WTC11 (cell line): ENCODE measurements at regions of chr9 and their contacts with region 1.

Region 1: GRCh38 chr9:93003552-93004407 is 54.7 kb upstream of the SUSD3 start:
- DNase-seq: peak; percentile 77
- ATAC-seq: peak; percentile 97
- H3K4me3 Mint-ChIP-seq: no peak overlapping the region
- H3K27ac Mint-ChIP-seq: no peak overlapping the region
- H3K4me1 Mint-ChIP-seq: peaks cover 15% of the 10 kb centered on the region
- H3K27me3 Mint-ChIP-seq: peaks cover 7% of the 10 kb centered on the region
- CTCF ChIP-seq: peak; percentile 53; the same call in 1 of the 2 replicates

Region 2: DNA sequence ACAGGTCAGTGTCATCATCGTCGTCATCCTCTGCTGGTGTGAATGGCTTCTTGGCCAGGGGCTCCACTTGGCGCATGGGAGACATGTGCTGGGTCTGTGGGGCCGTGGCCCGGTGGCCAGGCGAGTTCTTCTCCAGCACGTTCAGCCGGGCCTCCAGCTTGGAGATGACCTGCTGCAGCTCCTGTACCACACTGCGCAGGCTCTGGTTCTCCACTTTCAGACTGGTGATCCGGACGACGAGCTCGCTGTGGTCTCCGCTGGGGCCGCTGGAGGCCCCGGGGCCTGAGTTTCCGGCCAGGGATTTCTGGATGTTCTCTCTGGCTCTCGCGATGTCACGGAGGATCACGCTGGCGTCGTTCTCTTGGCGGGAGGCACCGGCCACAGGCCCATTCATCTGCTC is 166.6 kb before region 1 on chr9:
- CTCF ChIA-PET with region 1: no interaction called
- POLR2A ChIA-PET with region 1: no interaction called
- DNase-seq: no peak
- ATAC-seq: no peak
- H3K4me3 Mint-ChIP-seq: no peak overlapping the region
- H3K27ac Mint-ChIP-seq: no peak overlapping the region
- H3K4me1 Mint-ChIP-seq: no peaks in the 10 kb centered on the region
- H3K27me3 Mint-ChIP-seq: peaks cover 20% of the 10 kb centered on the region
- CTCF ChIP-seq: no peak

Region 3: DNA sequence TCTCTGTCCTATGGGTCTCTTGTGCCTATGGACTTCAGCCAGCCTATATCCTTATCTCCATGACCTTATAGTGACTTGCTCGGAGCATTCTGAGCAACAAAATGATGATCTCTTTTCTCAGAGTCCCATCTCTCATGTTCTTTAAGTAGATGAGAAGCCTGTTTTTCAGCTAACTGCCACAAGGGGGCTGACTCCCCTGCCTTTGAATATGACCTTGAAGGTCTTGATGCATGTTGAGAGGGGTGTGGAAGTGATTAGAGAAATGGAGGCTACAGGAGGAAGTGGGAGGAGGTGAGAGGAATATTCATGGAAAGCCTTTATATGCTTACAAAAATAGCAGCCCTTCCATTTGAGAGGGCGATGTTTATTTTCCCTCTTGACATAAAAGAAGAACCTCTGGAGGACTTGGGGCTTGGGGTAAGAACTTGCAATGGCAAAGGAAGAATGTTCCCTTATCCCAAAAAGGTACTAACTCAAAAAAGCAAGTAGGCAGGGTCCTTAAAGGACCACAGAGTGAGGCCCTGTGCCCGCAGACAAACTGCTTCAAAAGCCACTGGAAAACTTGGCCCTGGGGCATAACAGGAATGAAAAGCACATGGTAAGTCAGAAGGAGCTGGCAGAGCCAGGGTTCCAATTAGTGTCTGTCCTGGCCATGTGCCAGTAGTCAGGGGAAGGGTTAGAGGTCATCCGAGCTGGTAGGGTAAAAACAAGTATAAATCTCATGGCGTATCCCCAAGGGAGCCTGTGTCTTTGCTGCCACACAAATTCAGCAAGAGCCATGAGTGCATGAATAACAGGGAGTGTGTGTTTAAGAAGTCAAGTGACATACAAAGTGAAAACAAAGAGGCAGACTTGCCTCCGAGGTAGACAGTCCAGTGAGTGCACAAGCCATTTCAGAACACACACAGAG is 17.3 kb before region 1 on chr9:
- CTCF ChIA-PET with region 1: interaction called, 21 read pairs
- POLR2A ChIA-PET with region 1: no interaction called
- DNase-seq: no peak
- ATAC-seq: 0 out of 2 replicates have a peak, but pooled peaks have one; percentile 11
- H3K4me3 Mint-ChIP-seq: no peak overlapping the region
- H3K27ac Mint-ChIP-seq: peak overlapping the region; percentile 5; the same call in 1 of the 2 replicates
- H3K4me1 Mint-ChIP-seq: peaks cover 49% of the 10 kb centered on the region
- H3K27me3 Mint-ChIP-seq: peaks cover 14% of the 10 kb centered on the region
- CTCF ChIP-seq: peak; percentile 35; the same call in 1 of the 2 replicates

Region 4: GRCh38 chr9:93013856-93014582 is 10.2 kb after region 1 on chr9:
- CTCF ChIA-PET with region 1: interaction called, 19 read pairs
- POLR2A ChIA-PET with region 1: no interaction called
- DNase-seq: peak; percentile 47
- ATAC-seq: no peak
- H3K4me3 Mint-ChIP-seq: no peak overlapping the region
- H3K27ac Mint-ChIP-seq: peak overlapping the region; percentile 47
- H3K4me1 Mint-ChIP-seq: peaks cover 41% of the 10 kb centered on the region
- H3K27me3 Mint-ChIP-seq: no peaks in the 10 kb centered on the region
- CTCF ChIP-seq: no peak

Region 5: GRCh38 chr9:93037476-93037971 is 33.7 kb after region 1 on chr9:
- CTCF ChIA-PET with region 1: interaction called, 12 read pairs
- POLR2A ChIA-PET with region 1: no interaction called
- DNase-seq: no peak
- ATAC-seq: no peak
- H3K4me3 Mint-ChIP-seq: no peak overlapping the region
- H3K27ac Mint-ChIP-seq: no peak overlapping the region
- H3K4me1 Mint-ChIP-seq: peaks cover 14% of the 10 kb centered on the region
- H3K27me3 Mint-ChIP-seq: no peaks in the 10 kb centered on the region
- CTCF ChIP-seq: no peak